ENCODE measurements at regions of chr3 and their contacts with region 1.

Region 1: DNA sequence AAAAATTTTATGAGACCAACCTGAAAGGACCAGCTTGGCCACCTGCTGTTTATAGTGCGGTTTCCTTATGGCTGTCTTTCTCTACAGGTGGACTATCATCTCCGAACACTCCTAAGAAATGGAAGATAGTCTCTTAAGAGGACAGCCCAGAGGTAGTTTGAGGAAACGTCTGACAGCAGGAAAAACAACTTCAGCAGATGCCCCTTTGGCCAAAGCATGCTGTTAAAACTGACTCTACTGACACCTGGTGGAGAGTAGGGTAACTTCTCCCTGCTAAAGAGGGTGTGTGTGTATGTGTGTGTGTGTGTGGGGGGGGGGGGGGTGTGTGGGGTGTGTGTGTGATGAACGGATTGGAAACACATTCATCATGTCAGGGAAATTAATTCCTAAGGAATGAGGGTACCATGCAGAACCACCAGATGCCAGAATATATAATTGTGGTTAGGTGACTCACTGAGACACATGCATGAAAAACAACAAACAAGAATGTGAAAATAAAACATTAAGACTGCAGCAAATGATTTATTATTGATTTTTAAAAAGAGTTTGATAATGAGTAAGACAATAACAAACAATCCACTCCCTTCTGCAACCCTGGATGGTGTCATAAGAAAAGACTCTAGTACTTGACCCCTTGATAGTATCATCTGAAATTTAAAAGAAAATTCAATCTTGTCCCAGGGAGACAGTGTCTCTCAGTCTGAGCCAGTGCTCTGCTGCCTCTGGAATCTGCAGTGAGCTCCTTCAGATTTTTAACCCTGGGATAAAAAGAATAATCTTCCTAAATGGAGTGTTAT is 256.5 kb downstream of the THRB start:
- DNase-seq: no peak
- ATAC-seq: peak; percentile 73 to 76
- H3K4me3 ChIP-seq: no peak overlapping the region
- H3K27ac ChIP-seq: no peak overlapping the region
- H3K4me1 ChIP-seq: peaks cover 3% of the 10 kb centered on the region
- H3K27me3 ChIP-seq: no peaks in the 10 kb centered on the region

Region 2: DNA sequence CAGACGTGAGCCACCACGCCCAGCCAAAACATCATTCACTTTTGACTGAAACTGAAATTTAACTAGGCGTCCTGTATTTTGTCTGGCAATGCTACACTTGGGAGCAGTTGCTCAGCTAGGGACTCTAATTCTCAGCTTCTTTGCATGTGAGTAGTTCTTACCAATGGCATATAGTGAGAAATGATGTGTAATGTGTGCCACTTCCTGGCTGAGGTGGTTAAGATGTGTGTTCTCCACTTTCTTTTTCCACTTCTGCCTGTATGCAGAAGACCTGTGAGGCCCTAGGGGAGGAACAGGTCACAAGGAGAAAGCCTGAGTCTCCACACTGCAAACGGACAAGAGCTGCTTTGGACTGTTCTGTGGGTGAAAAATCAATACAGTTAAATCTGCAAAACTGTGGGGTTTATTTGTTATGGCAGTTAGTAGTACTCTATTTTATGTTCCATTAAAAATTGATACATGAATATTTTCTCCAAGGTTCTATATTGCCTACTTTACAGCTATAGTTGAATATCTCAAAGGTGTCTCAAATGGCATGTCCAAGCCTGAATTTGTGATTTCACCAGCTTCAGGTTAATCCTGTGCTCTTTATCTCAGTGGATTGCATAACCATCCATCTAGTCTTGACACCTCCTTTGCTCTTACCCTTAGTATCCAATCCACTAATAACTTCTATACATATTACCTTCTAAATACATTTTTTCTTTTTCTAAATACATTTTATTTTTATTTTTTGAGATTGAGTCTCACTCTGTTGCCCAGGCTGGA is 233.8 kb before region 1 on chr3:
- intact Hi-C with region 1: loop called in 3 of 4 experiments (anchors 5 to 10 kb)
- DNase-seq: no peak
- ATAC-seq: no peak
- H3K4me3 ChIP-seq: no peak overlapping the region
- H3K27ac ChIP-seq: no peak overlapping the region
- H3K4me1 ChIP-seq: no peaks in the 10 kb centered on the region
- H3K27me3 ChIP-seq: no peaks in the 10 kb centered on the region

Region 3: DNA sequence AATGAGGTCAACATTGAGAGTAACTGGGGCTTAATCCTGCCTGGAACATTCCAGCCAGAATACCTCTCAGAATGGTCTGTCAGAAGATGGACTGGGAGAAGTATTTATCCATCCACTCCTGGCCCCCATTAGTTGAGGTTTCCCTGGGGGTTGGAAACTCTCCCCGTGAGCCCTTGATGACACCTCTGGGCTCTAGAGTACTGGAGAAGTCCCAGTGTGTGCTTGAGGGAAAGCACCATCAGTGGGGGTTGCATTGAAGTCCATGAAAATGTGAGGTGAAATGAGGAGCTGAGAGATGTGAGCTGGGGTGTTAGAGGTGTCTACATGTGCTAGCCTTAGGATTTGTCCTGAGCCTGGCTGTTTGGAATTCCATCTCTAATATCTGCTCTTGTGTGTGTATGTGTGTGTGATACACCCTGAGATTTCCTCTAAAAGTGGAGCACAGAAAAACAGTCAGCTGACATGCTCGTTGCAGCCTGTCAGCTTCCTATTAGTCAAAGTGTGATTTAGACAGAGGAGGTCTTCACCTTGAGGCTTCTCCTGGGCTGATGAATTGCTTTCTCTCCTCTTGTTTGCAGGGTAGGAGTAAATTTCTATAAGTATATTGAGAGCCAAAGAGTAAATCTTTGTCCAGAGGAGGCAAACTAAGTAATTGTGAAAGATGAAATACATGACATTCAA is 225.4 kb before region 1 on chr3:
- intact Hi-C with region 1: loop called in 2 of 4 experiments (anchors 10 kb)
- DNase-seq: no peak
- ATAC-seq: no peak
- H3K4me3 ChIP-seq: no peak overlapping the region
- H3K27ac ChIP-seq: no peak overlapping the region
- H3K4me1 ChIP-seq: no peaks in the 10 kb centered on the region
- H3K27me3 ChIP-seq: no peaks in the 10 kb centered on the region

Region 4: GRCh38 chr3:24185738-24186384 is 52.3 kb before region 1 on chr3:
- intact Hi-C with region 1: loop called in 2 of 4 experiments (anchors 5 to 10 kb)
- DNase-seq: peak; percentile 34 to 56 (median 46)
- ATAC-seq: peak; percentile 68 to 83
- H3K4me3 ChIP-seq: no peak overlapping the region
- H3K27ac ChIP-seq: no peak overlapping the region
- H3K4me1 ChIP-seq: peaks cover 2% of the 10 kb centered on the region
- H3K27me3 ChIP-seq: no peaks in the 10 kb centered on the region

Region 5: DNA sequence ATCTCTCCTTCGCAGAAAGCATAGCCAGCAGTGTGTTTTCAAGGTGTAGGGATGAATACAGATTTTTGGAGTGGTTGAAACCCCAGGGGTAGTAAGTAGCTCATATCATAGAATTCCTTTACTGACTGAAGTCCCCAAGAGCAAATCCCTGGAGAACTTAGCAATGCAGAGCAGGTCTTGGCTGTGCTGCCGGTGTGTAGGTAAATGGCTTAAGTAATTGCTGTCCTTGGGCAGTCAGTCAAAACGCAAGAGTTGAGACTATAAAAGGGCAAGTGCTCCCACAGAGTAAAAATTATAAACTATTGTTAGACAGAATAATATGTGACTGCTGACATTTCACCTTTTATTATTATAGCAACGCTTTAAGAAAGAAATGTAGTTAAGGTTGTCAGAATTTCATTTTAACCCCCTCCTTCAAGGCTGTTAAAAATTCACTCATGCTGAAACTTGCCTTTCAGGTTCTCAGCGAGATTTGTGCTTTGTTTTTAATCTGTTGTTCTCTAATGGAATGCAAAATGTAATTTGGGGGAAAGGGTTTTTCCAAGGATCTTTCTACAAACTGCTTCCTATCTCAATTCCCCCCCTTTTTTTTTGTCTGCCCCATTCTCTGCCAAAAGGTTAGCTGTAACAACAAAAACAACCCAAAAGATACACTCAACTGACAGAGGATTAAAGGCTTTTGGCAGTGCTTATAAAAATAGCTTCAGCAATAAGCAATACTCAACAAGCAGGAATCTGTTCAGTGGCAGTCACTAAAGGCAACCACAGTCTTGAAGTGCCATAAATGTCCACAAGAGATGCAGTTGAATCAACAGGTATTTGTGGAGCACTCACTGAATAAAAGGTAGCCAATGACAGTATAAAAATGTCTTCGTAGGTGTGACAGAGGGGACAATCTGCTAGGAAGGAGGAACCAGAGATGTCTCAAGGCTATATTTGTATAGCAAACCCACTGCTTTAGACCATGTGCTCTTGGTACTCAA is 151.2 kb after region 1 on chr3:
- intact Hi-C with region 1: no loop called
- DNase-seq: no peak
- ATAC-seq: no peak
- H3K4me3 ChIP-seq: no peak overlapping the region
- H3K27ac ChIP-seq: no peak overlapping the region
- H3K4me1 ChIP-seq: peaks cover 13% of the 10 kb centered on the region
- H3K27me3 ChIP-seq: no peaks in the 10 kb centered on the region